ENCODE measurements at regions of chr9 and their contacts with region 1.

Region 1: GRCh38 chr9:83538172-83538889 is at the start of gene FRMD3:
- DNase-seq: peak; percentile 90
- H3K4me3 ChIP-seq: peak within 1 kb of the TSS; percentile 34 to 59 (median 54)
- H3K27ac ChIP-seq: peak within 1 kb of the TSS; percentile 58 to 75 (median 66)
- H3K4me1 ChIP-seq: peaks cover 0 to 21% (median 9%) of the 10 kb centered on the region in 4 donors
- H3K27me3 ChIP-seq: peaks cover 3 to 21% (median 13%) of the 10 kb centered on the region in 3 donors
- CTCF ChIP-seq: peak; percentile 42 to 56 (median 48)
- EP300 ChIP-seq: no peak
- POLR2A ChIP-seq: no peak
- total RNA-seq, gene FRMD3: 5.9 to 27.4 (median 8.3) TPM

Region 2: DNA sequence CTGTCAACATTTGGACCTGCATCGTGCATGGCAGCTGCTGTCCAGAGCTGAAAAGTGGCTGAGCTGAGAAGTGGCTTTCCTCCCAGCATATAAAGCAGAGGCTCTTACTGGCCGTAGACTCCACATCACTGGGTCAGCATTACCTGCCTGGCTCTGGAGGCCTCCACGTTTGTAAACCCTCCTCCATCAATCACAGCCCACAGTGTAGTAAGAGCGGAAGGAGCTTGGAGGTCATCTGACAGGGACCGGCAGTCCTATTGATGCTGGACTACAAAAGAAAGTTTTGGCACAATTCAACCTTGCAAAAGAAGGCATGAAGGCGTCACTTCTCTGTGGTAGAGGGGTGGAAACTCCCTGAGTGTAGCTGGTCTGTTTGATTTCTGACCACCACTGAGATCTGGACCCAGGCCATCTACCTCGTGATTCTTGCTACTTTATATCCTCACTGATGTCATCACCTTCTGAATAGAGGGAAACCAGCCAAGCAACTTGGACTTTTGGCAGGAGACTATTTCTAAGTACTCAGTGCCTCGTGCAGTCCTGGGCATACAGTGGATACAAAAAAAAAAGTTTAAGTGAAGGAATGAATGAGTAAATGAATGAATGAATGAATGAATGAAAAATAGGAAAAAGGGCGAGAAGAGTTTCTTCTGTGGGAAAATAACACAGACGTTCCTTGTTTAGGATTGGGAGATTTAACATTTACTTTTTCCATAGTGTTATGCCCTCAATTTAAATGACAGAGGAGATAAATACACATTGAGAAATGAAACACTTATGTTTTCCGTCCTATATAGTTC is 490.2 kb before region 1 on chr9:
- intact Hi-C with region 1: no loop called
- DNase-seq: no peak
- H3K4me3 ChIP-seq: no peak overlapping the region
- H3K27ac ChIP-seq: no peak overlapping the region
- H3K4me1 ChIP-seq: no peaks in the 10 kb centered on the region
- H3K27me3 ChIP-seq: no peaks in the 10 kb centered on the region
- CTCF ChIP-seq: no peak
- EP300 ChIP-seq: no peak
- POLR2A ChIP-seq: no peak

Region 3: DNA sequence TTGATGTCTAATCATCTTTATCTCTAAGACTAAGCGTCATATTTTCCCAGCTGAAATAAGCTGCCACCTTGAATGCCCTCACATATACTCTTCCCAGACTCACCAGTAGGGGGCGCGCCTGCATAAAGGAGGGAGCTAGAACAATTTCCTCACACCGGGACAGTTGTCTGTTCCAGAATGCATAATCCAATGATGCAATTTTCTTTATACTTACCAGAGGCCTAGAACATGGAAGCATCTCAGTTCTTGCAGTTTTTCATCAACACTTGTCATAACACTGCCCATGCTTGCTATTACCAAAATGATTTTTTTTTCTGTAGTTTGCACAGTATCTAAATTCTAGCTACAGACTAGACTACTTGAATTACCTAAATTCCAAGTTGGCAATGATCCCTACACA is 204.0 kb before region 1 on chr9:
- intact Hi-C with region 1: loop called (anchors 5 kb)
- DNase-seq: peak; percentile 91
- H3K4me3 ChIP-seq: no peak overlapping the region
- H3K27ac ChIP-seq: no peak overlapping the region
- H3K4me1 ChIP-seq: no peaks in the 10 kb centered on the region
- H3K27me3 ChIP-seq: no peaks in the 10 kb centered on the region
- CTCF ChIP-seq: peak; percentile 71 to 83 (median 76)
- EP300 ChIP-seq: no peak
- POLR2A ChIP-seq: no peak

Measured in sigmoid colon (tissue), 7 donors.